Natural killer cell (primary cell): ENCODE measurements at regions of chr9 and their contacts with region 1.

Region 1: DNA sequence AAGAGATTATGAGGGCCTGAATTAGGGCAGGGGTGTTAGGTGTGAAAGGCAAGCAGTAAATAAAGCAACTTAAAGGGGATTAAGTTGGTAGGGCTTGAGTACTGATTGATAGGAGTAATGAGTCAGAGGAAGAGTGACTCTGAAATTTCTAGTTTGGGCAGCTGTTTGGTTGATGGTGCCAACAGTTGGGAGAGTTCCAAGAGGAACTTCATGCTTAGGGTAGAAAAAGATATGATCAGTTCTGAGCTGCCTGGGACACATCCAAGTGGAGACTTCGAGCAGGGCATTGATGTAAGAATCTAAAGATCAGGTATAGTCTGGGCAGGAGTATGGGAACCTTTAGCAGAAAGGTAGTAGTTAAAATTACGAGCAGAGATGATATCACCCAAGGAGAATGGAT is 10.2 kb downstream of the MAMDC2 start:
- DNase-seq: no peak
- ATAC-seq: no peak
- H3K4me3 ChIP-seq: no peak overlapping the region
- H3K4me3 Mint-ChIP-seq: no peak overlapping the region
- H3K27ac ChIP-seq: no peak overlapping the region
- H3K27ac Mint-ChIP-seq: no peak overlapping the region
- H3K4me1 ChIP-seq: no peaks in the 10 kb centered on the region
- H3K4me1 Mint-ChIP-seq: no peaks in the 10 kb centered on the region
- H3K27me3 ChIP-seq: no peaks in the 10 kb centered on the region
- H3K27me3 Mint-ChIP-seq: peaks cover 0 to 13% of the 10 kb centered on the region in 2 donors
- CTCF ChIP-seq: no peak

Region 2: DNA sequence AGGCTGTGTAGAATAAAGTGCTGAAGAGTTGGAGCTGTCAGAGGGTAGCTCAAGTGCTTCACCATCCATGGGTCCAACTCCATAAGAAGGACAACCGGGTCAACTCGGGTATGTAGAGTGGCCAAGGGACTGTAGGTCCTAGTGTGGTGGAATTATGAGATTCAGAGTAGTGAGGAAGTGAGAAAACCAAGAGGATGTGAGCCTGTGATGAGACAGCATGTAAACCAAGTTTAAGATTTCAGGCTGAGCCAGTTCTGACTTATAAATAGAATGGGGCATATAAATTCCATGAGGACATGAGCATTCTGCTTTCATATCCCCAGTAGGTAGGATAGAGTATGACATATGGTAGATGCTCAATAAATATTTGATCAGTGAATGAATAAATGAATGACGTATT is 136.9 kb before region 1 on chr9:
- intact Hi-C with region 1: no loop called
- DNase-seq: no peak
- ATAC-seq: no peak
- H3K4me3 ChIP-seq: no peak overlapping the region
- H3K4me3 Mint-ChIP-seq: no peak overlapping the region
- H3K27ac ChIP-seq: no peak overlapping the region
- H3K27ac Mint-ChIP-seq: no peak overlapping the region
- H3K4me1 ChIP-seq: no peaks in the 10 kb centered on the region
- H3K4me1 Mint-ChIP-seq: peaks cover 0 to 5% of the 10 kb centered on the region in 2 donors
- H3K27me3 ChIP-seq: no peaks in the 10 kb centered on the region
- H3K27me3 Mint-ChIP-seq: peaks cover 5 to 11% of the 10 kb centered on the region in 2 donors
- CTCF ChIP-seq: no peak

Region 3: DNA sequence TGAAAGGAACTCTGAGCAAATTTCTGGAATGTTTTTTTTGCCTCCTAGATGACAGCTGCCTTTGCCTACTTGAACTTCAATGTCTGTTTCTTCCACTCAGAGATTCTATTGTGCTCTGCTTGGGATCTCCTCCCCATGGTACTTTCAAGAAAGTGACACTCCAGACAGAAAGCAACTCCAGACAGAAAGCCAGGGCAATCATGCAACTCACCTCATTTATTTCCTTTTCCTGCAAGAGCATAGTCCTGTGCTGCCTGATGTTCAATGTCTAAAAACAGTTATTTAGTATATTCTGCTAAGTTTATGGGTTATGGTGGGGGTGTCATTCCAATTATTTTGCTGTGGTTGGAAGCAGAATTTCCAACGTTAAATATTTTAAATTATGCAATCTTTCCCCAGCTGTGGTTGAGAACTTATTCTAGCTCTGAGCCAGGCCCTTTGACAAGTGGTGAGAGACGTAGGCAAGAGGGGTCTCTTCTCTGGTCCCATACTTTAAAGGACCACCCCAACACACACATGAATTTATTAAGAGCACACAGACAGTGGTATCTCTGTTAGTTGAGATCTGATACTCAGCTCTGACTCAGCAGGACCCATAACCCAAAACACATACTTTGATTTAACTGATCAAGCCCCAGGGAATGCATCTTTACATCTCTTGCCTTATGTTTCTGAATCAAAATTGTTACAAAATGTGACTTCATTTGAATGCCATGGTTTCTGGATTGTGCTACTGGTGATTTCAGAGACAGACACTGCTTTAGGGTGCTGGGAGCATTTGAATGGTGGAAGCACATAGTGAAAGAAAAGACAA is 49.8 kb before region 1 on chr9:
- intact Hi-C with region 1: loop called (anchors 10 kb)
- DNase-seq: no peak
- ATAC-seq: no peak
- H3K4me3 ChIP-seq: no peak overlapping the region
- H3K4me3 Mint-ChIP-seq: no peak overlapping the region
- H3K27ac ChIP-seq: no peak overlapping the region
- H3K27ac Mint-ChIP-seq: no peak overlapping the region
- H3K4me1 ChIP-seq: no peaks in the 10 kb centered on the region
- H3K4me1 Mint-ChIP-seq: no peaks in the 10 kb centered on the region
- H3K27me3 ChIP-seq: no peaks in the 10 kb centered on the region
- H3K27me3 Mint-ChIP-seq: peaks cover 6 to 35% of the 10 kb centered on the region in 2 donors
- CTCF ChIP-seq: no peak

Region 4: DNA sequence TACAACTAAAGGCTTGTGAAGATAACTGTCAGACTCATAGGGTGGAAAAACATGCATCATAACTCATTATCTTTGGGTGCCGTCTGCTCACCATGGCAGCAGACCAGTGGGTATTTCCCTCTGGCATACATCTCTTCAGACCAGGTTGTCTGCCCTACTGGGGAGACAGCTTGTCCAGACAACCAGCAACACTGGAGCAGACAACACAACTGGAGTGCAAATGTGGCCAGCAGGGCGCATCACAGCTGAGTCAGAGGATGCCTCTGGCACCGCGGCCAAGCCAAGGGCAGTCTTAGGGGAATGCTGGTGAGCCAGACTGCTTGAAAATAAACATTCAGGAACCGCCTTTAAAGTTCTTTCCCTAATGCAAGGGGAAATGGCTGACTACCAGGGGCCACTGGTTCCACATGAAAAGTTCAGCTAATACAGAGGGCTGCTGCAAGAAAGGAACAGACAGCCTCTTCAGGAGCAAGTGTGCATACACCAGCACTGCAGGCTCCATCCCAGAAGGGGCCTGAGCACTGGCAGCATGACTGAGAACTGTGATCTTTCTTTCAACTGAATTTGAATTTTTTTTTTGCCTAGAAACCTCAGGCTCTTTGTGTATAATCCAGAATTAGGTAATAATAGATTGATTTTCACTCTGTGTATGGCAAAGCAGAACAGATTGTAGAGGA is 67.1 kb after region 1 on chr9:
- intact Hi-C with region 1: no loop called
- DNase-seq: no peak
- ATAC-seq: no peak
- H3K4me3 ChIP-seq: no peak overlapping the region
- H3K4me3 Mint-ChIP-seq: no peak overlapping the region
- H3K27ac ChIP-seq: no peak overlapping the region
- H3K27ac Mint-ChIP-seq: no peak overlapping the region
- H3K4me1 ChIP-seq: no peaks in the 10 kb centered on the region
- H3K4me1 Mint-ChIP-seq: no peaks in the 10 kb centered on the region
- H3K27me3 ChIP-seq: no peaks in the 10 kb centered on the region
- H3K27me3 Mint-ChIP-seq: peaks cover 7 to 8% of the 10 kb centered on the region in 2 donors
- CTCF ChIP-seq: no peak